ENCODE measurements at regions of chr4 and their contacts with region 1.

Region 1: DNA sequence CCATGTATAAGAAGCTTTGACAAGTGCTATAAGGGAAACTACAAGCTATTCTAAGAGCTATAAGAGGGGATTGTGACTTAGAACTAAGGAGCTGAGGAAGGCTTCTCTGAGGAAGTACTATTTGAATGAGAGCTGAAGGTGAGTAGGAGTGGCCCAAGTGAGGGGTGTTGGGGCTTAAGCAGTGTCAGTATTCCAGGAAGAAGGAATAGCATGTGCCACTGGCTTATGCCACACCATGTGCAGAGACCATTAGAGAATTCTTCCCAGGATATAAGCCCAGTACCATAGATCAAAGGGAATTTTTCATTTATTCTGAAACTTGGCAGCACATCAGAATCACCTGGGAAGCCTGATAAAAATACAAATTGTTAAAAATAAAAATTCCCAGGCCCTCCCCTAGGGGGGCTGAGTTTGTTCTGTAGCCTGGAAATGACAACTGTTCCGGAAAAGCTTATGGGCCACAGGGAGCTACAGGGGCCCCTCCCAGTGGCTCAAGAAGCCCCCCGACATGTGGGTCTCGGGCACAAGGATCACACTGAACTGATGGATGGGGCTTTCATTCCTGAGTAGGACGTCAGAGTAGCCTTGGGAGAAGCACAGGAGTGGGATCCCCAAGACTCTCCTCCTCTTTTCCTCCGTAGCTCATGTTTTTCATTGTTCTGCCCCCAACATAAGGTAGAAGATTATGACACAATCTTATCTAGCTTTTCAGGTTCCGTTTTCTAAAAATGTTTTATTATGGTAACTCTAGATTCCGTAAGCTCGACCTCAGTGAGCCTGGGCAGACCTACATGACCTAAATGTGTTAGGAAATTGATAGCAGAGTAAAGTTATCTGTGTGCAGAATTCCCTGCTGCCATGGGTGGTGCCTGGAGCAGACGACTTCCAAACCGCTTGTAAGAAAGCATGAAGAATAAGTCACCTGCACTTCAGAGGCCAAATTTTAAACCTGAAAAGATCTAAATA is 119.3 kb downstream of the AFF1 start:
- DNase-seq: no peak
- ATAC-seq: no peak
- H3K4me3 ChIP-seq: no peak overlapping the region
- H3K4me3 Mint-ChIP-seq: no peak overlapping the region
- H3K27ac ChIP-seq: no peak overlapping the region
- H3K27ac Mint-ChIP-seq: peak overlapping the region in 1 of 2 donors; percentile 23
- H3K4me1 ChIP-seq: peaks cover 0 to 5% of the 10 kb centered on the region in 2 experiments
- H3K4me1 Mint-ChIP-seq: peaks cover 77 to 92% (median 80%) of the 10 kb centered on the region in 3 donors
- H3K27me3 ChIP-seq: no peaks in the 10 kb centered on the region
- H3K27me3 Mint-ChIP-seq: no peaks in the 10 kb centered on the region

Region 2: GRCh38 chr4:87025614-87026041 is 28.5 kb before region 1 on chr4:
- CTCF ChIA-PET with region 1: interaction called in 1 of 2 experiments, 11 read pairs
- POLR2A ChIA-PET with region 1: no interaction called
- DNase-seq: no peak
- ATAC-seq: no peak
- H3K4me3 ChIP-seq: no peak overlapping the region
- H3K4me3 Mint-ChIP-seq: no peak overlapping the region
- H3K27ac ChIP-seq: no peak overlapping the region
- H3K27ac Mint-ChIP-seq: no peak overlapping the region
- H3K4me1 ChIP-seq: peaks cover 7% of the 10 kb centered on the region in 2 experiments
- H3K4me1 Mint-ChIP-seq: peaks cover 51 to 71% (median 57%) of the 10 kb centered on the region in 3 donors
- H3K27me3 ChIP-seq: no peaks in the 10 kb centered on the region
- H3K27me3 Mint-ChIP-seq: no peaks in the 10 kb centered on the region

Region 3: DNA sequence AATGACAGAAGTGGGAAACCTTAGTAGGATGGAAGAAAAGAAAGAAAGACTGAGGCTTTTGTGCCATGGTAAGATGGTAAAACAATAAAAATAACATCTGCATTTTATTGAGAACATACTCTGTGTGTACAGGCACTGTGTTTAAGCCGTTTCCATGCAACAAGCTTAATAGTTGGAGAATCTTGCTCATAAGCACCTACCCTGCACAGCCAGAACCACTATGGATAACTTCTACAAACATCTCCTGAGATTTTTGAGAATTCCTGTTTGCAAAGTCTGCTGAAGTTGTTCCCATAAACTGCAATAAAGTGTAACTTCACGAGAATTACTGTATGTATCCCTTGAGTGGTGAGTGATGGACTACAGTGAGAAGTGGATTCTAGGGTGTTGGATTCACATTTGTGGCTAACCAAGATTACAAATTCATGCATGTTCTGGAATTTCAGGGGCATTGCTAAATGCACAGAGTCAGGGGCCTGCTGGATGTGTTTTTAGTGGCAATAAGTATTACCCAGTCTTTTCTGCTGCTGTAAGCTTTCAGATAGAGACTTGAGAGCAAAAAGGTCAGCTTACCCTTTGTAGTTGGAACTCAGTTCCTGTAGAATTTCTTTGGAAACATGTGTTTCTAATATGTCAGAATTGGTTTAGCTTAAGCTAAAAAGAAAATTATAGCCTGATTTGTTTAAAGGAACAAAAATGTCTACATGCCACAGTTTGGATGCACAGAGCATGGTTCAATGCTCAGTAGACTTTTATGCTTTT is 13.2 kb after region 1 on chr4:
- CTCF ChIA-PET with region 1: no interaction called
- POLR2A ChIA-PET with region 1: no interaction called
- DNase-seq: no peak
- ATAC-seq: no peak
- H3K4me3 ChIP-seq: no peak overlapping the region
- H3K4me3 Mint-ChIP-seq: no peak overlapping the region
- H3K27ac ChIP-seq: no peak overlapping the region
- H3K27ac Mint-ChIP-seq: no peak overlapping the region
- H3K4me1 ChIP-seq: no peaks in the 10 kb centered on the region
- H3K4me1 Mint-ChIP-seq: peaks cover 23 to 47% (median 46%) of the 10 kb centered on the region in 3 donors
- H3K27me3 ChIP-seq: no peaks in the 10 kb centered on the region
- H3K27me3 Mint-ChIP-seq: no peaks in the 10 kb centered on the region

Region 4: GRCh38 chr4:87819281-87819919 is 765.3 kb after region 1 on chr4:
- CTCF ChIA-PET with region 1: no interaction called
- POLR2A ChIA-PET with region 1: no interaction called
- DNase-seq: no peak
- ATAC-seq: no peak
- H3K4me3 ChIP-seq: no peak overlapping the region
- H3K4me3 Mint-ChIP-seq: no peak overlapping the region
- H3K27ac ChIP-seq: no peak overlapping the region
- H3K27ac Mint-ChIP-seq: no peak overlapping the region
- H3K4me1 ChIP-seq: no peaks in the 10 kb centered on the region
- H3K4me1 Mint-ChIP-seq: no peaks in the 10 kb centered on the region
- H3K27me3 ChIP-seq: peaks cover 0 to 12% of the 10 kb centered on the region in 2 experiments
- H3K27me3 Mint-ChIP-seq: peaks cover 14 to 36% of the 10 kb centered on the region in 2 donors

Measured in T-cell (primary cell).